Ascending aorta (tissue), 2 donors: ENCODE measurements at regions of chr9 and their contacts with region 1.

Region 1: DNA sequence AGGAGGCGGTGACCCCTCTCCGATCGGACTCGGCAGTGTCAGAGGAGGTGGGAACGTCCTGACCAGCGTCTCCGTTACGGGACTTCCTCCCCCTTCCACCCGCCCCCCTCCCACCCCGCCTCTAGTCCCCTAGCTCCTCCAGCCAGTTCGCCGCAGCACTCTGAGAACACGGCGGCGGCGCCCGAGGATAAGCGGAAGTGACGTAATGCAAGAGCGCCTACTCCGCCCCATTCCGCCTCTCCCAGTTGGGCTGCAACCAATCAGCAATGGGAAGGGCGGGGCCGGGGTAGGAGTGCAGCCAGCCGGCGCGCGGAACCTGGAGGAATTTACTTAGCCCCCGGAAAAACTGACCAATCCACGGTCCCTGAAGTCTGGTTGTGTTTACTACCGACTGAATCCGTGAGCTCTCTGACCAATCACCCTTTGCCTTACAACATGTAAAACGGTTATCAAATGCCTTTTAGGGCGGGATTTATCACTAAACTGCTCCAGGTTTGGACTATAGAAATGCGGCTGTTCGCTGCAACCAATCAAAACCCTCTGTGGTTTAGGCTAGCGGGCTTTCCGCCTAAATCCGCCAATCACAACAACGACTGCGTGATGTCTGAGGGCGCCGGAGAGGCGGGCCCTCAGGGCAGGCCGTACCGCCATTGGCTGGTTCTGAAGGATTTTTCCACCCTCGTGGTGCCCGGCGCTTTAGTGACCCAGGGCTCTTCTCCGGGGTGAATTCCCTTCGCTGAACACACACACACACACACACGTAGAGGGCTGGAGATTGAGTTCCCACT is at the start of gene ZBTB5:
- DNase-seq: peak; percentile 98 to 100
- H3K4me3 ChIP-seq: peak within 1 kb of the TSS; percentile 79 to 92
- H3K27ac ChIP-seq: peak within 1 kb of the TSS; percentile 97 to 99
- H3K4me1 ChIP-seq: peaks cover 4 to 27% of the 10 kb centered on the region in 2 donors
- H3K27me3 ChIP-seq: no peaks in the 10 kb centered on the region
- CTCF ChIP-seq: no peak
- total RNA-seq, gene ZBTB5: 3.4 TPM

Region 2: DNA sequence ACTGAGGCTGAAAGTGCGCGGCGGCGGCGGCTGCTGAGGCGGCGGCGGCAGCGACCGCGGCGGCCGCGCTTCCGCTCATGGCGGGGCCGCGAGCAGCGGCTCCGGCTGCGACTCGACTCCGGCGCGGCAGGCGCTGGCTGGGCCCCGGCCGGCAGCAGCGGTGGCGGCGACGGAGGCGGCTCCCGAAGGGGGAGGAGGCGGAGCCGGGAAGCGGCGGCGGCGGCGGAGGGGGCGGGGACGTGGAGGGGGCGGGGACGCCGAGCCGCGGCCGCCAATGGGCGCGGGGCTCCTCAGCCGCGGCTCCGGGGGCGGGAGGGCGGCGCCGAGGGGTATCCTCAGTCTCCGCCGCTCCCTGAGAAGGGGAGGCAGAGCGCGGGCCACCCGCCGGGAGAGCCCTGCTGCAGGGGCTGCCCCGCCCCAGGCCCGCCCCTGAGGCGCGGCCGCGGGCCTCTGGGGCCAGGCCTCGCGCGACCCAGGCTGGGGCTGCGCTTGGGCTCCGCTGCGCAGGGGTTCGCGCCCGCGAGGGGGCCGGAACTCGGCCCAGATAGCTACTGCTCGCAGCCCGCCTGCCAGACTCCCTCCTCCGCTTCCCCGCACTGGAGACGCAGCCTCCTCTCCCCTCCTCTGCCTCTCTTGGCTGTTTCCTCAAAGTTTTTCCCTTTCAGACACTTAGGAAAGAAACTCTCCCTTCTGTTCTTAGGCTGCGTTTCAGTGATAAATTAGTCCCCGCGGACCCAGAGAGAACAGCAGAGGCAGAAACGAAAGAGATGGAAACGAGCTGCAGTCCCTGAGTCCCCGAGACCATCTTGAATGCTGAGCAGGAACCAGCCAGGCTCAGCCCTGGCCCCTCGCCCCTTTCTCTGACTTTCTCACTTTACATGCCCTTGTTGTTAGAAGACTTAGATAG is 977.7 kb before region 1 on chr9:
- intact Hi-C with region 1: loop called (anchors 10 kb)
- DNase-seq: peak; percentile 63 to 95
- H3K4me3 ChIP-seq: peak overlapping the region; percentile 74 to 99
- H3K27ac ChIP-seq: peak overlapping the region; percentile 87 to 93
- H3K4me1 ChIP-seq: peaks cover 0 to 25% of the 10 kb centered on the region in 2 donors
- H3K27me3 ChIP-seq: no peaks in the 10 kb centered on the region
- CTCF ChIP-seq: peak in 1 of 3 experiments; percentile 19

Region 3: GRCh38 chr9:37119907-37120842 is 345.3 kb before region 1 on chr9 and contains the start of gene ZCCHC7:
- intact Hi-C with region 1: loop called (anchors 1 kb)
- DNase-seq: peak; percentile 82 to 98
- H3K4me3 ChIP-seq: peak within 1 kb of the TSS; percentile 88 to 95
- H3K27ac ChIP-seq: peak within 1 kb of the TSS; percentile 95 to 96
- H3K4me1 ChIP-seq: peaks cover 0 to 13% of the 10 kb centered on the region in 2 donors
- H3K27me3 ChIP-seq: no peaks in the 10 kb centered on the region
- CTCF ChIP-seq: no peak
- total RNA-seq, gene ZCCHC7: 25.1 TPM

Region 4: DNA sequence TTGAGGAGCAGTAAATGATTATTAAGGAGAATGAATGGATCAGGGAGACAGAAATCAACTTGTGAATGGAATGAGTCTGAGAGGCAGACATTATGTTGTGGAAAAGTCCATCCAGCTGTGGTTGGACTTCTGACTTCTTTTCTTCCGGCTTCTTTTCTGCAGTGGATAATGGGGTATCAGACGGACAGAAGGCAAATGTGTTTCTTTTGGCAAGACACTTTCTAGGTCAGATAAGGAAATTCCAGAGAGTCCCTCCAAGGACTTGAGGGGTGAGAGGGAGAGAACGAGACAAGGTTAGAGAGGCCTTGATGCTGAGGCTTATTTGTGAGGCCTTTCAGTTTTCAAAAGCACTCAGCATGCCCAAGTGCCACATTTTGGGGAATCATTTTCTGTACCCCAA is 60.1 kb before region 1 on chr9:
- intact Hi-C with region 1: no loop called
- DNase-seq: no peak
- H3K4me3 ChIP-seq: no peak overlapping the region
- H3K27ac ChIP-seq: no peak overlapping the region
- H3K4me1 ChIP-seq: no peaks in the 10 kb centered on the region
- H3K27me3 ChIP-seq: no peaks in the 10 kb centered on the region
- CTCF ChIP-seq: no peak

Region 5: GRCh38 chr9:37422289-37423104 is 42.9 kb before region 1 on chr9 and contains the start of gene GRHPR:
- intact Hi-C with region 1: loop called (anchors 1 kb)
- DNase-seq: peak; percentile 52 to 92
- H3K4me3 ChIP-seq: peak within 1 kb of the TSS; percentile 80 to 88
- H3K27ac ChIP-seq: peak within 1 kb of the TSS; percentile 77 to 86
- H3K4me1 ChIP-seq: peaks cover 8 to 18% of the 10 kb centered on the region in 2 donors
- H3K27me3 ChIP-seq: no peaks in the 10 kb centered on the region
- CTCF ChIP-seq: no peak
- total RNA-seq, gene GRHPR: 131 TPM

Region 6: DNA sequence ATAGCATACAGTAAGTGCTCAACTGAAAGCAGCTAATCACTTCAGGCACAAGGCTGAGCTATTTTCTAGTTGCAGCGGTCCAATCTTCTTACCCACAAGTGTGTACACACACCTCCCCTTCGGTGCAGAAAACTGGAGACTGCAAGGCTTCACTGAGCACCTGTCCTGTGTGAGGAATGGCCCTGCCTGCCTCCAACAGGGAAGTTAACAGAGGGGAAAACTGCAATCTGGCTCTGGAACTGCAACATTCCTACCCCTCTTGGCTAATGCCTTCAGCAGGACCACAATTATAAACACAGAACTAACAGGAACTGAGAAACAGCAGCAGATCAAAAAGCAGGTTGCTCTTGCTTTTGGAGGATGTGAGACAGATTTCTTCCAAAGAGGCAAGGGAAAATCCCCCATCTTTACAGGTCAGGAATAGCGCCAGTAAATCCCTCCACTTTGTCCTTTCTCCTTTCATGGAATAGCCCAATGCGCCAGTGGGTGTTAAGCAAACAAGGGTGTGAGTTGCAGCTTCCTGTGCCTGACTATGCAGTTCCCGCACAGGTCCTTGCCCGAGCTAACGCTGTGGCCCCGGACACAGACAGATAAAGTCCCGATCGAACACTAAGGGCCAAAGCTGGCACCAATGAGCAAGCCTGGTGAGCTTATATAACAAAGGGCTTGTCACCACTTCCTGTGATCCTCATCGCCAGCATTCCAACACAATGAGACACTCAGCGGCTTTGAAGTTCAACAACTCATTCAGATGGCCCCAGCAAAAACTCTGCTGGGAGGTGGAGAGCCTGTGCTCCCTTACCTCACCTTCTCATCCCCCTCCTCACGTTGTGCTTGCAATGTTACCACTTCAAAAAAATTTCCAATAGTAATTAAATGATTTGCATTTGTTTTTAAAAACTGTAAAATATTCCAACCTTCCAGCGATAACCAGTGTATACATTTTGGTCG is 582.1 kb after region 1 on chr9:
- intact Hi-C with region 1: loop called (anchors 10 kb)
- DNase-seq: peak in 1 of 2 donors; percentile 89
- H3K4me3 ChIP-seq: peak overlapping the region; percentile 5 to 32
- H3K27ac ChIP-seq: peak overlapping the region; percentile 76 to 85
- H3K4me1 ChIP-seq: peaks cover 13 to 37% of the 10 kb centered on the region in 2 donors
- H3K27me3 ChIP-seq: no peaks in the 10 kb centered on the region
- CTCF ChIP-seq: no peak